PC-3 (cell line): ENCODE measurements at regions of chr11 and their contacts with region 1.

Region 1: DNA sequence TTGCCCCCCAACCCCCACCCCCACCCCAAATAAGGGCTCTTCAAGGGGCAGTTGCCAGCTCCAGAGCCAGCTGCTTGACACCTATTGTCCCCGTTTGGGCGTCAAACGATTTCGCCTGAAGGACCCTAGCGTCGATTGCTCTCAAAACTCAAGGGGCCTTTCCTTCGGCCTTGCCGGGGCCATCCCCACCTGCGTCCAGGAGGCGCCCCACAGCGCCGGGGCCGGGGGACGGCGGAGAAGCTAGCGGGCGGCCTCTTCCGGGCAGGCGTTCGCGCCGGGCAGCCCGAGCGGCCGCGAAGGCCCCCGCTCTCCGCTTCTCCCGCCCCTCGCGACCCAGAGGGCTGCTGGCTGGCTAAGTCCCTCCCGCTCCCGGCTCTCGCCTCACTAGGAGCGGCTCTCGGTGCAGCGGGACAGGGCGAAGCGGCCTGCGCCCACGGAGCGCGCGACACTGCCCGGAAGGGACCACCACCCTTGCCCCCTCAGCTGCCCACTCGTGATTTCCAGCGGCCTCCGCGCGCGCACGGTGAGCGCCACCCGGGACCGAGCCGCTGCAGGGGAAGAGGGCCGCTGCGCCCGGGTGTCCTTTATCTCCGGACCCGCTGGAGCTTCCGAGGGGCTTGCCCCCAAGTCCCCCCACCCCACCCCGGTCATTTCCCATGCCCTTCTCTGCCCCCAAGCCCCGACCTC is at the start of gene CAPRIN1:
- DNase-seq: peak; percentile 90
- ATAC-seq: peak; percentile 81
- H3K4me3 ChIP-seq: peak within 1 kb of the TSS; percentile 99
- H3K27ac ChIP-seq: peak within 1 kb of the TSS; percentile 96
- H3K4me1 ChIP-seq: peaks cover 28% of the 10 kb centered on the region
- H3K27me3 ChIP-seq: no peaks in the 10 kb centered on the region
- CTCF ChIP-seq: no peak
- total RNA-seq, gene CAPRIN1: 224 and 258 TPM in 2 replicates

Region 2: DNA sequence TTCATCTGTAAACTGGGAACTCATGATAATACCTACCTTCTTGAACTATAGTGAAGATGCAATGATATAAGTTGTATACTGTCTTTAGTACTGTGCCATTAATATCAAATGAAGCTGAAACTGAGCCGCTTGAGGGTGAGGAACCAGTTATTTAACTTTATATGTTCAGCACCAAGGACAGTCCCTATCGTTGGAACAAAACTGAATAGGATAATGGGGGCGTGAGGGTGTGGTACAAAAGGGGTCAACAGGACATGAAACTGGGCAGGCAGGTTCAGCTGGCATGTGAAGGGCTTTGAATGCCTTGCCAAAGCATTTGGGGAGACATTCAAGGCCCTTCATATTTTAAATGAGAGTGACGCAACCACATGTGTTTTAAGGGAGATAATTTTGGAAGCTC is 463.4 kb before region 1 on chr11:
- CTCF ChIA-PET with region 1: no interaction called
- POLR2A ChIA-PET with region 1: no interaction called
- intact Hi-C with region 1: no loop called
- DNase-seq: no peak
- ATAC-seq: no peak
- H3K4me3 ChIP-seq: no peak overlapping the region
- H3K27ac ChIP-seq: no peak overlapping the region
- H3K4me1 ChIP-seq: no peaks in the 10 kb centered on the region
- H3K27me3 ChIP-seq: no peaks in the 10 kb centered on the region
- CTCF ChIP-seq: no peak

Region 3: DNA sequence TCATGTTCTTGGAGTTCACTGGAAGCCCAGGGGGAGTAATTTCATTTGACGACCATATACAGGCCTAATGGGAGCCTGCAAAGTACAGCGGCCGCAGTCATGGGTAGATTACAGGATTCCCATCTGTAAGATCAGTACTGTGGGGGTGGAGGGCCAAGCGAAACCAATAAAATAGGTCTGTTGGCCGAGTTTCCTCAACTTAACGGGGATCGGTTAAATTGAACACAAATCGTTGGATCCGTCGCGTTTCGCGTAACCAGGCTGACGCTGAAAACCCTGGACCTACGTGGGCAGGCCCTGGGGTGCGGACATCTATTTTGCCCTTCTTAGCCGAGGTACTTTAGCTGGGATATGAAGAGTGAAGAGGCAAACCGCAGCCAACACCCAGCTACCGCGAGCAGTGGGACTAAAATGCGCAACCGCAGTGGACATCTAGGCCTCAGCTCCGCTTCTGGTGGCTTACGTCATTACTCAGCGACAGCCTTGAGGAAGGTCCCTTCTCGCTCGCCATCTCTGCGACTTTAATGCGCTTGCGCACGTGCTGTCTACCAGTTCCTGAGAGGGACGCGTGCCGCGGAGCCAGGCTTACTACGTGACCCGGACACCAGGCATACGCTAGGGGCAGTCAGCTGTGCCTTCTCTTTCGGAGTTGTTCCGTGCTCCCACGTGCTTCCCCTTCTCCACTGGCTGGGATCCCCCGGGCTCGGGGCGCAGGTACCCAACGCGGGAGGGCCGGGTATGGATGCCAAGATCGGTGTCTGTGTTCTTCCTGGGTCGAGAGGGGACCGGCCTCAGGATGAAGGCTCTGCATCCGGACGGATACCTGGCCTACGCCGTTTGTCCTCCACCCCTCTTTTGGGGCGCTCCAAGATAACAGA is 53.8 kb after region 1 on chr11 and contains the start of gene NAT10:
- CTCF ChIA-PET with region 1: interaction called, 5 read pairs
- POLR2A ChIA-PET with region 1: no interaction called
- intact Hi-C with region 1: loop called (anchors 1 kb)
- DNase-seq: peak; percentile 98
- ATAC-seq: peak; percentile 87
- H3K4me3 ChIP-seq: peak within 1 kb of the TSS; percentile 85
- H3K27ac ChIP-seq: peak within 1 kb of the TSS; percentile 88
- H3K4me1 ChIP-seq: peaks cover 19% of the 10 kb centered on the region
- H3K27me3 ChIP-seq: no peaks in the 10 kb centered on the region
- CTCF ChIP-seq: no peak
- total RNA-seq, gene NAT10: 48.7 and 55.9 TPM in 2 replicates